Activated CD4-positive, alpha-beta T cell treated with anti-CD3 and anti-CD28 coated beads, Interleukin-2, amount 10 ng/mL, durations not matched to agents 24 days and 14 days (primary cell): ENCODE measurements at regions of chr20 and their contacts with region 1.

Region 1: GRCh38 chr20:43456809-43457639 is 672 bp upstream of the SRSF6 start:
- DNase-seq: peak; percentile 96
- H3K4me3 Mint-ChIP-seq: peak overlapping the region; percentile 93
- H3K27ac Mint-ChIP-seq: peak overlapping the region; percentile 98
- H3K4me1 Mint-ChIP-seq: peaks cover 22% of the 10 kb centered on the region
- H3K27me3 Mint-ChIP-seq: peaks cover 17% of the 10 kb centered on the region

Region 2: DNA sequence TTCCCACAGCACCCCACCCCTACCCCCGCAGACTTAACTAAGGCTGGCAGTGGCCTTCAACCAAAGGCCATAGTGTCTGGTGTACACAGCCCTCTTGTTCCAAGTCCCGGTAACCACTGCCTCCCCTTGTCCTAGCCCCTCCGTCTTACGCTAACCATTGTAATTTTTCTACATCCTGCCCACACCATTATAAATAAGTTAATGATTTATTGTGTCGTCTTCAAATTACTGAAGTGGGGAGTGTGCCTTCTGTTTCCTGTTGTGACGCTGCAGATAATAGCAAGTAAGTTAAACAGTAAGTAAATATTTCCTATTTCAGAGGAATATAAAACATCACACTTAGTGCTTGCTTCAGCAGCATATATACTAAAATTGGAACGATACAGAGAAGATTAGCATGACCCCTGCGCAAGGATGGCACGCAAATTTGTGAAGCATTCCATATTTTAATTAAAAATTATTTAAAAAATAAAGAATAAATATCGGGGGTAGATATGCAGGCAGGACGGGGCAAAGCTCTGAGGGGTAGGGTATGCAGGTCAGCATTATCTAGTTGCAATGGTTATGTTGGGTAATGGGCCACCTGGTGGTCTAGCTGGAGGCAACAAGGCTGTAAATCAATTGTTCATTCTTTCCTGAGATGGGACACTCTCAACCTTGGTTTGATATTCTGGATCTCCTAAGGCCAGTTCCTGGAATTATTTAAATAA is 15.8 kb after region 1 on chr20:
- intact Hi-C with region 1: no loop called
- DNase-seq: no peak
- H3K4me3 Mint-ChIP-seq: no peak overlapping the region
- H3K27ac Mint-ChIP-seq: no peak overlapping the region
- H3K4me1 Mint-ChIP-seq: peaks cover 2% of the 10 kb centered on the region
- H3K27me3 Mint-ChIP-seq: peaks cover 14% of the 10 kb centered on the region

Region 3: DNA sequence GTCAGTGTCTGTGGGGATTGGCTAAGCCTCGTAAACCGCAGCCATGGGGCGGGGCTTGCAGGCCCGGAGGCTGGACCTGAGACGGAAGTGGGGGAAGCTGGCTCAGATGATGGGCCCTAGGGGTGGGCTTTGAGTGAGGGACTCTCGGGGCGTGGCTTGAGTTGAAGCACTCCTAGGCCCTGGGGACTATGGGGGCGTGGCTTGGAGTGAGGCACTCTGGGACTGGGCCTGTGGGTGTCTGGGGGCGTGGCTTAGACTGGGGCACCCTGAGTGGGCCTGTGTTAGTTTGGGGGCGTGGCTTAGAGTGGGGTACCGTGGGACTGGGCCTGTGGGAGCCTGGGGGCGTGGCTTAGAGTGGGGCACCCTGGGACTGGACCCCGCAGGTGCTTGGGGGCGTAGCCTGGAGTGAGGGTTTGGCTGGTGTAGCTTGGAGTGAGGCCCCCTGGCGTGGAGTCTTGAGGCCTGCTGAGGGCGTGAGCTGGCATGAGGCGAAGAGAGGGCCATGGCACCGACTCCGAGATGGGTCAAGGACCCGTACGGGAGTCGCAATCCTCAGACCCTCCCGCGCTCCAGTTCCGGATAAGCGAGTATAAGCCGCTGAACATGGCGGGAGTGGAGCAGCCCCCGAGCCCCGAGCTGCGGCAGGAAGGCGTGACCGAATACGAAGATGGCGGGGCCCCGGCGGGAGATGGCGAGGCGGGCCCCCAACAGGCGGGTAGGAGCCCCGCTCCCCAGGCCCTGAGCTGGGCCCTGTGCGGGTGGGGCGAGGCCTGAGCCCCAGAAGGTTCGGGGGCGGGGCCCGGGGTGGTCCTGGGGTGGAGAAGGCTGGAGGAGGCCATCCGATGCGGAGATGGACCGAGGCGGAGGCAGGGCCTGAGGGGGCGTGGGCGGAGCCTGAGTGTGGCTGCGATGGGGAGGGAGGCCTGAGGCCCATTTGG is 57.3 kb after region 1 on chr20:
- intact Hi-C with region 1: loop called (anchors 2 kb)
- DNase-seq: peak; percentile 97
- H3K4me3 Mint-ChIP-seq: peak overlapping the region; percentile 97
- H3K27ac Mint-ChIP-seq: peak overlapping the region; percentile 93
- H3K4me1 Mint-ChIP-seq: peaks cover 6% of the 10 kb centered on the region
- H3K27me3 Mint-ChIP-seq: peaks cover 2% of the 10 kb centered on the region

Region 4: DNA sequence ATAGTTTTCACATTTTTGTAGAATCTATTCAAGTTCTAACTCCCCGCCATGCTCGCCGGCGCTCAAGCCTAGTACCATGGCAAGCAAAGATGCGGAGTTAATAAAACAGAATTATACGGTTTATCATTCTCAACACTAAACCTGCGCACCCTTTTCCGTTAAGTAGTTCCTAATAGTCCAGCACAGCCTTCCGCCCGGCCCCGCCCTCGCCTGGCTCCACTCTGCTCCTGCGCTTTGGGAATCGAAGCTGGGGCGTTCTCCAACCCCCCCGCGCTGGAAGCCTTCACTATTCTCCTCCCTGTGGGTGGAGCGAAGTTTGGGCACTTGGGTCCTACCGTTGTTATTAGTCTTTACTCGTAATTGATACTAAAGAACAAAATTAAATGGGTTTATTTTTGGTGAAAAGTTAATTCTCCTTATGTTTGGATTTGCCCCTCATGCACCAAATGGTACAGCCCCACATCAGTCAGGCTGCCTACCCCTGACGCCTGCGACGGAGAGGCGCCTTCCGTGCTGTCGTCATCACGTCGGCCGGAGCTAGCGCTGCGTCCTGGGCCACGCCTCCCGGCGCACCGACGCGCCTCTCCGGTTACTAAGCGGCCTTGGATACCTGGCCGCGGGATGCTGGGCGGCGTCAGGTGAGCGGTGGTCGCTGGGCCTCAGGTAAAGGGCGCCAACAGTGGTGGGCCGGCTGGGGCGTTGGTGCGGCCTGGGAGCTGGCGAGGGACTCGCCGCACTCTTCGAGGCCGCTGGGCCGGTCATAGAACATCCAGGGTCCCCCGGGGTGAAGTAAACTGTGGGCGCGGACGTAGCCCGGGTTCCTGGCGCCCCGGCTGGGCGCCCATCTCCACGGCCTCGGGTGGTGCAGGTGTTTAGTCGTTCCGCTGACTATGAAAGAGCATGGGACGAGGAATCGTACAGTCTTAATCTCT is 133.6 kb after region 1 on chr20 and contains the start of gene IFT52:
- intact Hi-C with region 1: loop called (anchors 1 kb)
- DNase-seq: peak; percentile 97
- H3K4me3 Mint-ChIP-seq: peak within 1 kb of the TSS; percentile 94
- H3K27ac Mint-ChIP-seq: peak within 1 kb of the TSS; percentile 90
- H3K4me1 Mint-ChIP-seq: peaks cover 14% of the 10 kb centered on the region
- H3K27me3 Mint-ChIP-seq: peaks cover 4% of the 10 kb centered on the region
- total RNA-seq, gene IFT52: 18.6 and 20.7 TPM in 2 replicates